Ovary (tissue), 10 donors: ENCODE measurements at regions of chr17 and their contacts with region 1.

Region 1: DNA sequence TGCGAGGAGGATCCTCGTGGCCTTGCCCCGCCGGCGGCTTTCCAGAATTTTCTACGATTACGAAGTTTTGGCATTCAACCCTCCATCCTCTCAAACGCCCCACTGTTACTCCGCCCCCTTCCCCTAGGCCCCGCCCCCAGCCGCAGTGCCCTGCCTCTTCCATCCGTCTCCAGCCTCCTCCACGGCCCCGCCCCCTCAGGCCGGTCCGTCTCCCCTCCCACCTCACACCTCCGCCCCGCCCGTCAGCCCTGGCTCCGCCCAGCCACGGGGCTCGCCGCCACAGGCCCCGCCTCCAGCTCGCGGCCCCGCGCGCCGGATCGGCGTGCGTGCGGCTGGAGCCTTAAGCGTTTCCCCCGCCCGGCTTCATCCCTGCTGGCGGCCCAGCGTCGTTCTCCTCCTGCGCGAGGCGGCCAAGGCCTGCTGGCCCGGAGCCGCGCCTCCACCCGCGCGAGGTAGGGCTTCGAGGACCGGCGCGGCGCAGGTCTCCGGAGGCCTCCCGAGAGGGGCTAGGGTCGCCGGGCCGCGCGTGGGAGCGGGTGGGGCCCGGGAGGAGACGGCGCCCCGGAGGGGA is at the starts of genes C17orf67 and DGKE:
- DNase-seq: peak; percentile 99 to 100 (median 100)
- H3K4me3 ChIP-seq: peak within 1 kb of the TSS; percentile 77
- H3K27ac ChIP-seq: peak within 1 kb of the TSS; percentile 90 to 92
- H3K4me1 ChIP-seq: peaks cover 10% of the 10 kb centered on the region
- H3K27me3 ChIP-seq: no peaks in the 10 kb centered on the region
- CTCF ChIP-seq: no peak
- EP300 ChIP-seq: no peak
- POLR2A ChIP-seq: no peak
- total RNA-seq, gene C17orf67: 2.4 to 6.0 (median 3.3) TPM
- total RNA-seq, gene DGKE: 8.5 to 16.4 (median 11.8) TPM

Region 2: GRCh38 chr17:56913864-56914640 is 80.2 kb after region 1 on chr17 and contains the start of gene TRIM25:
- intact Hi-C with region 1: loop called in 1 of 4 experiments (anchors 5 kb)
- DNase-seq: peak; percentile 85 to 90 (median 89)
- H3K4me3 ChIP-seq: peak within 1 kb of the TSS; percentile 91
- H3K27ac ChIP-seq: peak within 1 kb of the TSS; percentile 9 to 75
- H3K4me1 ChIP-seq: peaks cover 12% of the 10 kb centered on the region
- H3K27me3 ChIP-seq: no peaks in the 10 kb centered on the region
- CTCF ChIP-seq: no peak
- EP300 ChIP-seq: no peak
- POLR2A ChIP-seq: peak; percentile 93
- total RNA-seq, gene TRIM25: 23.6 to 57.6 (median 45.9) TPM

Region 3: DNA sequence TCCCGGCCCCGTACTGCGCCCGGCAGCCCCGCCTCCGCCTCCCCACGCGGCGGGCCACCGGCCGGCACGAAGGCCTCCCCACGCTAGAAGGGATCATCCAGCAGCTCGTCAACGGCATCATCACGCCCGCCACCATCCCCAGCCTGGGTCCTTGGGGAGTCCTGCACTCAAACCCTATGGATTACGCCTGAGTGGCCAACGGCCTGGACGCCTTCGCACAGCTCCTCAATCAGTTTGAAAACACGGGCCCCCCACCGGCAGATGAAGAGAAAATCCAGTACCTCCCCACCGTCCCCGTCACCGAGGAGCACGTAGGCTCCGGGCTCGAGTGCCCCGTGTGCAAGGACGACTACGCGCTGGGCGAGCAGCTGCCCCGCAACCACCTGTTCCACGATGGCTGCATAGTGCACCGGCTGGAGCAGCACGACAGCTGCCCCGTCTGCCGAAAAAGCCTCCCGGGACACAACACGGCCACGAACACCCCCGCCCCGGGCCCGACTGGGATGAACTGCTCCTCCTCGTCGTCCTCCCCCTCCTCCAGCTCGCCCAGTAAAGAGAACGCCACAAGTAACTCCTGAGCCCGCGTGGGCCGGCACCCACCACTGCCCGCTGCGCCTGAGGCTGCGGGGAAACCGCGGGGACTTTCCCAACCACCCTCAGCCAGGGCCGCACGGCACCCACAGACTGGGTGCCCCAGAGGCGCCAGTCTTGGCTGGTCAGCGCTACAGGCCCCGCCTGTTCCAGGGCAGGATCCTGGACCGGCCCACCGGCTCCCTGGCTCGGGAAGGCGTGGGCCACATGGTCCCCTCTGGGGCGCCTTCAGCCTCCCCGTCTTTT is 212.2 kb after region 1 on chr17:
- intact Hi-C with region 1: no loop called
- DNase-seq: peak in 1 of 5 donors; percentile 19
- H3K4me3 ChIP-seq: peak overlapping the region; percentile 27
- H3K27ac ChIP-seq: no peak overlapping the region
- H3K4me1 ChIP-seq: peaks cover 5% of the 10 kb centered on the region
- H3K27me3 ChIP-seq: no peaks in the 10 kb centered on the region
- CTCF ChIP-seq: no peak
- EP300 ChIP-seq: no peak
- POLR2A ChIP-seq: no peak